Aorta (tissue), 5 donors: ENCODE measurements at regions of chr15 and their contacts with region 1.

Region 1: DNA sequence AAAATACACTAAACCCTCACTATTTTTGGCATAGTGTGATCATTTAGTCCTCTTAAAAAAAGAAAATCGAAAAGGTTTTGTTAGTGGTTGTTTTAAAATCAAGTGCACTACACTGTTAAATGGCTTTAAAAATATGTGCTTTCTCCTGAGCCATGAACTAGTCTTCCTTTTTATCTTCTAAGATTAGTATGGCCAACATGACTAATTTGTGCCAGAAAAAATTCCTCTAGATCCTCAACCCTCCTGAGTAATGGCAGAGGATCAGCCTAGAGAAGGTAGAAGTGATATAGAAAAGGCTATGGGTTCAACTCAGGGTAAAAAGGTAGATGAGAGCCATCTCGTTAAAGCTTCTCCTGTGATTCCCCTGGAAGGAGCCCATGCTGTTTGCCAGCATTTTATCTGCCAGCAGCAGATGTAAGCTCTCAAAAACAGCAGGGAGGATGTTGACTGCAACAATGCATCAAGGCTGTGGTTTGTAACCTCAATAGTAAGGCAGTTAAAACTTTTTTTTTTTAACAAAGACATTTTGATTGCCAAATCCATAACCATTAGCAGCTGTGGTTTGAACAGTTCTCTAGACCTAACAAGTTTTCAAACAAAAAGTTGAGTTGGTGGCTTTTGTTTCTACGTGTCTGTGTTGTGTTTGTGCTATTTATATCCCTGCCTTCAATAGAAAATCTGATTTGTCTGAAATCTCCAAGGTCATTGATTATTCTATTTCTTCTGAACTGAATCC is 30.2 kb upstream of the ZNF609 start:
- DNase-seq: no peak
- ATAC-seq: no peak
- H3K4me3 ChIP-seq: no peak overlapping the region
- H3K27ac ChIP-seq: no peak overlapping the region
- H3K4me1 ChIP-seq: no peaks in the 10 kb centered on the region
- H3K27me3 ChIP-seq: no peaks in the 10 kb centered on the region

Region 2: DNA sequence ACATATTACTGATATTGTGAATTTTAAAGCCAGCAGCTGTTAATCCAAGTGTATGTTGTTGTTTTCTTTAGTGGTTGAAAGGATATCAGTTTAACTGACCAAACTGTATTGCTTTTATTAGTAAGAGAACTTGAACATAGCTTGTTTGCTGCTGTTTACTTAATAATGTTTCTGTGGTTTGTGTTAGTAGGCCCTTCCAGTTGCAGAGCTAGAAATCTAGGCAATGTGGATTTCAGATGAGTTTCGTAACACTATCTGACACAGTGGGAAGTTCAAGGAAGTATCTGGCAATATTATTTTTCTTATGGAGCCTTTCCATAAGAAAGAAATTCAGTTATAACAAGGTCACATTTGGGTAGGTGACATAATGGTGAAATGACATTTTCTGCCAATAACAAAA is 48.7 kb after region 1 on chr15:
- intact Hi-C with region 1: no loop called
- DNase-seq: no peak
- ATAC-seq: no peak
- H3K4me3 ChIP-seq: no peak overlapping the region
- H3K27ac ChIP-seq: no peak overlapping the region
- H3K4me1 ChIP-seq: no peaks in the 10 kb centered on the region
- H3K27me3 ChIP-seq: no peaks in the 10 kb centered on the region

Region 3: DNA sequence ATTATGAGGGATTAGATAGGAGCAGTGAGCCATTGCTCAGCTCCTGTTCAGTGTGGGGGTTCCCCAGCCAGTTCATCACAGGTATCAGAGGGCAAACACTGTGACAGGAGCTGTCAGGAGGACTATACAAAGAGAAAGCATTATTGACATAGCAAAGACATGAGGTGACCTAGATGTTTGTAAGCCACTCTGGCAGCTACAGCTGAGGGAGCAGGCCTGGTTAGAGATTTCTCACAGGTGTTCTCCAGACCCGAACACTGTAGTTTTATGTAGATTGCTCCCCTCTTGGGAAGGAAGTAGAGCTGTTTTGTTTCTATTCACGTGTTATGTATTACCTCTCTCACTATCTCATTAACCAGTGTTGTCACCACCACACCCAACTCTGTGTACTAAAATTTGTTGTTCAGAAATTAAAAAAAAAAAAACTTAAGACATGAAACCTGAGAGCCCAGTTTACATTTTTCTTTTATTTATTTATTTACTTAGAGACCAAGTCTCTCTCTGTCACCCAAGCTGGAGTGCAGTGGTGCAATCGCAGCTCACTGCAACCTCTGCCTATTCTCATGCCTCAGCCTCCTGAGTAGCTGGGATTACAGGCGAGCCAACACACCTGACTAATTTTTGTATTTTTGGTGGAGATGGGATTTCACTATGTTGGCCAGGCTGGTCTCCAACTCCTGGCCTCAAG is 221.5 kb after region 1 on chr15:
- intact Hi-C with region 1: loop called in 1 of 2 experiments (anchors 10 kb)
- DNase-seq: no peak
- ATAC-seq: no peak
- H3K4me3 ChIP-seq: no peak overlapping the region
- H3K27ac ChIP-seq: no peak overlapping the region
- H3K4me1 ChIP-seq: no peaks in the 10 kb centered on the region
- H3K27me3 ChIP-seq: no peaks in the 10 kb centered on the region